Caco-2 (cell line): ENCODE measurements at regions of chr2 and their contacts with region 1.

Region 1: DNA sequence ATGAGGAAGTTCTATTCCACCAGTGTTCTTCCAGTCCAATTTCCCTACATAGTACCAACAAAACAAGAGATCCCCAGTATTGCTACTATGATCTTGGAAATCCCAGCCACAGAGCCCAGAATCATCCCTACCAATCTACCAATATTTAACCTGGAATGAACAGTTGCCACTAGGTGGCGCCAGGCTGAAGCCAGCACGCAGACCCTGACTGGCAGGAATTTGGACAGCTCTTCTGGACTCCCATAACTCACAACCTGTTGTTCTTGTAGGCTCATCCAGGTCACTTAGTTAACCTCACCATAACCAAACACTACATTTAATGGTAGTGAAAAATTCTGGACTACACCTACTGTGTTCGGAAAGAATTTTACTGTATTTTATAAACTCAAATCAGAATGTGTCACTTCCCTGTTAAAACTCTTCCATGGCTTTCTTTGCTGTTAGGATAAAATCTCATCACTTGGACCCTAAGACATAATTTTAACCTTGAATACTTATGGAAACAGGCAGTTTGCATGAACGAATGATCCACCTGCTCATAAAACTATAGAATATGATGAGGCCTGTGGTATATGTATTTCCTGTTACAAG is 59.8 kb upstream of the SLC38A11 start:
- DNase-seq: peak; percentile 69 to 81
- H3K4me3 ChIP-seq: no peak overlapping the region
- H3K4me3 Mint-ChIP-seq: no peak overlapping the region
- H3K27ac Mint-ChIP-seq: no peak overlapping the region
- H3K4me1 ChIP-seq: 0 out of 2 replicates have a peak, but pooled peaks cover 3% of the 10 kb centered on the region
- H3K4me1 Mint-ChIP-seq: no peaks in the 10 kb centered on the region
- H3K27me3 ChIP-seq: no peaks in the 10 kb centered on the region
- H3K27me3 Mint-ChIP-seq: peaks cover 7% of the 10 kb centered on the region
- CTCF ChIP-seq: peak; percentile 83 to 95

Region 2: GRCh38 chr2:164737612-164738081 is 277.5 kb before region 1 on chr2:
- CTCF ChIA-PET with region 1: no interaction called
- POLR2A ChIA-PET with region 1: no interaction called
- intact Hi-C with region 1: no loop called
- DNase-seq: peak; percentile 75 to 80
- H3K4me3 ChIP-seq: no peak overlapping the region
- H3K4me3 Mint-ChIP-seq: no peak overlapping the region
- H3K27ac Mint-ChIP-seq: no peak overlapping the region
- H3K4me1 ChIP-seq: peaks cover 25% of the 10 kb centered on the region
- H3K4me1 Mint-ChIP-seq: peaks cover 19% of the 10 kb centered on the region
- H3K27me3 ChIP-seq: no peaks in the 10 kb centered on the region
- H3K27me3 Mint-ChIP-seq: no peaks in the 10 kb centered on the region
- CTCF ChIP-seq: peak; percentile 65 to 67

Region 3: GRCh38 chr2:165067958-165068757 is 53.0 kb after region 1 on chr2:
- CTCF ChIA-PET with region 1: interaction called, 4 read pairs
- POLR2A ChIA-PET with region 1: no interaction called
- intact Hi-C with region 1: loop called (anchors 5 kb)
- DNase-seq: peak; percentile 74 to 84
- H3K4me3 ChIP-seq: no peak overlapping the region
- H3K4me3 Mint-ChIP-seq: peak overlapping the region; percentile 43
- H3K27ac Mint-ChIP-seq: peak overlapping the region; percentile 51
- H3K4me1 ChIP-seq: peaks cover 21% of the 10 kb centered on the region
- H3K4me1 Mint-ChIP-seq: peaks cover 21% of the 10 kb centered on the region
- H3K27me3 ChIP-seq: no peaks in the 10 kb centered on the region
- H3K27me3 Mint-ChIP-seq: no peaks in the 10 kb centered on the region
- CTCF ChIP-seq: no peak

Region 4: GRCh38 chr2:165114346-165114939 is 99.3 kb after region 1 on chr2:
- CTCF ChIA-PET with region 1: no interaction called
- POLR2A ChIA-PET with region 1: no interaction called
- intact Hi-C with region 1: loop called (anchors 5 kb)
- DNase-seq: no peak
- H3K4me3 ChIP-seq: no peak overlapping the region
- H3K4me3 Mint-ChIP-seq: no peak overlapping the region
- H3K27ac Mint-ChIP-seq: no peak overlapping the region
- H3K4me1 ChIP-seq: peaks cover 21% of the 10 kb centered on the region
- H3K4me1 Mint-ChIP-seq: peaks cover 8% of the 10 kb centered on the region
- H3K27me3 ChIP-seq: no peaks in the 10 kb centered on the region
- H3K27me3 Mint-ChIP-seq: no peaks in the 10 kb centered on the region
- CTCF ChIP-seq: no peak

Region 5: DNA sequence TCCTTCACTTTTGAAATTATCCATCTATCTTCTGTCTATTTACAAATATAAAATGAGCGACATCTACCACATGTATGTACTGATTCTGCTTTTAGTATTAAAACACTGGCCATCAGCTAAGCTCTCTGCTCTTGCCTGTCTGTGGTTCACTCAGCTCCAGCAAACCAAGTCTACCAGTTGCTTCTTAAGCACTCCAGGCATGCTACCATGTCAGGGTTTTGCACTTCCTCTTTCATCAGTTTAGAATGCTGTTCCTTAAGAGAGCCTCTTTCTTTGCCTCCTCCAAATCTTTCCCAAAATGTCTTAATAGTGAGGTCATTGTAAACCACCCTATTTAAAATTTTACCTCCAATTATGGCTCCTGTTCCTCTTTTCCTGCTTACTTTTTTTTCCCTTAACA is 129.2 kb after region 1 on chr2:
- CTCF ChIA-PET with region 1: no interaction called
- POLR2A ChIA-PET with region 1: no interaction called
- intact Hi-C with region 1: loop called (anchors 5 kb)
- DNase-seq: no peak
- H3K4me3 ChIP-seq: no peak overlapping the region
- H3K4me3 Mint-ChIP-seq: no peak overlapping the region
- H3K27ac Mint-ChIP-seq: no peak overlapping the region
- H3K4me1 ChIP-seq: no peaks in the 10 kb centered on the region
- H3K4me1 Mint-ChIP-seq: no peaks in the 10 kb centered on the region
- H3K27me3 ChIP-seq: no peaks in the 10 kb centered on the region
- H3K27me3 Mint-ChIP-seq: peaks cover 13% of the 10 kb centered on the region
- CTCF ChIP-seq: no peak

Region 6: DNA sequence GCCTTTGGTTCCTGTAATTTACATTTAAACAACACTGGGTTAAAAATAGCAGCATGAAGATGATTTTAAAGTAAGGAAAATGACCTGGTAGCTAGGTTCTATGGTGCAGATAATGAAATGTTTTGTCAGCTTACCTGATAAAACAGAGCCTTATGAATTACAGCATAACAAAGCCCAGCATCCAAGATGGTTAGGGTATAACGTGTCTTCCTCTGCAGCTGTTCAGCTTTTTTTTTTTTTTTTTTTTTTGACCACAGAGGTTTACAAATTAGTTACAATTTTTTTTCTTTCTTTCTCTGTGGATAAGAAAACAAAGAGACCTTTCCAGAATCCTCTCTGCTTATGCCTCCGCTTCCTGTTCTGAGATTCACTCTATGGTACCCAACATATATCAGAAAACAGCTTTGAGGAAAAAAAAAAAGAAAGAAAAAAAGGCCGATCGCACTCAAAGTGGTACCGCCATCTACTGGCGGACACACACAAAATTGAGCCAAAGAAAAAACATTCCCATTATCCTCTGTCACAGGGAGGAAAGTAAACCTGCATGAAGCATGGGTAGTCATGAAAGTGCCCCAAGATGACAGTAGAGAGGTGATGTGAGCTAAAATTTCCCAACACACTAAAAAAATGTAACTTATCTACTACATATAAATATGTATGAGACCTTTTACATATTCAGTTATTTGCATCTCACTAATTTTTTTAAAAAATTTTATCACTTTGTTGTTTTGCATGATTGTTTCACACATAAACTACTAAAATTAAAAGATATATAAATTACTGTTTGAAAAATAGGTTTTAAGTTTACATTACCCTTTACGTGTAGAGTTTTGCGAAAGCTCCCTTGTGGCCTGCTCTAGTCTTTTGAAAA is 188.8 kb after region 1 on chr2 and contains the start of gene SCN3A:
- CTCF ChIA-PET with region 1: interaction called, 74 read pairs
- POLR2A ChIA-PET with region 1: interaction called, 4 read pairs
- intact Hi-C with region 1: loop called (anchors 1 kb)
- DNase-seq: peak; percentile 40 to 58
- H3K4me3 ChIP-seq: no peak within 1 kb of the TSS
- H3K4me3 Mint-ChIP-seq: no peak within 1 kb of the TSS
- H3K27ac Mint-ChIP-seq: no peak within 1 kb of the TSS
- H3K4me1 ChIP-seq: no peaks in the 10 kb centered on the region
- H3K4me1 Mint-ChIP-seq: no peaks in the 10 kb centered on the region
- H3K27me3 ChIP-seq: no peaks in the 10 kb centered on the region
- H3K27me3 Mint-ChIP-seq: no peaks in the 10 kb centered on the region
- CTCF ChIP-seq: peak; percentile 67 to 80
- total RNA-seq, gene SCN3A: not detected in 2 replicates

Region 7: DNA sequence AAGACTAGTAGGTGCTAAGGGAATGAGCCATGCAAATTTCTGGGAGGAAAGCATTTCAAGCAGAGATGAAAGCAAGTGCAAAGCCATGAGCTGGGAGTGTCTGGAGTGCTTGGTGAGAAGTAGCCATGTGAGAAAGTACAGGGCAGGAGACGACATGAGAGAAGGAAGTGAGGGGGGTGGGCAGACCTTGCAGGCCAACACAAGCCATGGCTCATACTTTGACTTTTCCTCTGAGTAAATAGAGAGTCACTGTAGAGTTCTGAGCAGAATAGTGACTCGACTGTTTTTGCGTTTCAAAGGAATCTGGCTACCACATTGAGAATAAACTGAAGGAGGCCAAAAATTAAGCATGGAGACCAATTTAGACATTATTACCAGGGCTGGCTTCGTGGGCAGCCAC is 266.2 kb after region 1 on chr2:
- CTCF ChIA-PET with region 1: no interaction called
- POLR2A ChIA-PET with region 1: no interaction called
- intact Hi-C with region 1: no loop called
- DNase-seq: no peak
- H3K4me3 ChIP-seq: no peak overlapping the region
- H3K4me3 Mint-ChIP-seq: no peak overlapping the region
- H3K27ac Mint-ChIP-seq: no peak overlapping the region
- H3K4me1 ChIP-seq: no peaks in the 10 kb centered on the region
- H3K4me1 Mint-ChIP-seq: no peaks in the 10 kb centered on the region
- H3K27me3 ChIP-seq: no peaks in the 10 kb centered on the region
- H3K27me3 Mint-ChIP-seq: no peaks in the 10 kb centered on the region
- CTCF ChIP-seq: no peak

Region 8: GRCh38 chr2:165293440-165294353 is 278.6 kb after region 1 on chr2:
- CTCF ChIA-PET with region 1: no interaction called
- POLR2A ChIA-PET with region 1: no interaction called
- intact Hi-C with region 1: loop called (anchors 2 kb)
- DNase-seq: peak; percentile 60 to 85
- H3K4me3 ChIP-seq: no peak overlapping the region
- H3K4me3 Mint-ChIP-seq: no peak overlapping the region
- H3K27ac Mint-ChIP-seq: no peak overlapping the region
- H3K4me1 ChIP-seq: no peaks in the 10 kb centered on the region
- H3K4me1 Mint-ChIP-seq: no peaks in the 10 kb centered on the region
- H3K27me3 ChIP-seq: no peaks in the 10 kb centered on the region
- H3K27me3 Mint-ChIP-seq: peaks cover 15% of the 10 kb centered on the region
- CTCF ChIP-seq: peak; percentile 50 to 83

Region 9: GRCh38 chr2:165305391-165306096 is 290.4 kb after region 1 on chr2:
- CTCF ChIA-PET with region 1: interaction called, 3 read pairs
- POLR2A ChIA-PET with region 1: no interaction called
- intact Hi-C with region 1: loop called (anchors 5 kb)
- DNase-seq: no peak
- H3K4me3 ChIP-seq: no peak overlapping the region
- H3K4me3 Mint-ChIP-seq: no peak overlapping the region
- H3K27ac Mint-ChIP-seq: no peak overlapping the region
- H3K4me1 ChIP-seq: 0 out of 2 replicates have a peak, but pooled peaks cover 4% of the 10 kb centered on the region
- H3K4me1 Mint-ChIP-seq: peaks cover 8% of the 10 kb centered on the region
- H3K27me3 ChIP-seq: no peaks in the 10 kb centered on the region
- H3K27me3 Mint-ChIP-seq: no peaks in the 10 kb centered on the region
- CTCF ChIP-seq: no peak